ENCODE measurements at regions of chr19 and their contacts with region 1.

Region 1: DNA sequence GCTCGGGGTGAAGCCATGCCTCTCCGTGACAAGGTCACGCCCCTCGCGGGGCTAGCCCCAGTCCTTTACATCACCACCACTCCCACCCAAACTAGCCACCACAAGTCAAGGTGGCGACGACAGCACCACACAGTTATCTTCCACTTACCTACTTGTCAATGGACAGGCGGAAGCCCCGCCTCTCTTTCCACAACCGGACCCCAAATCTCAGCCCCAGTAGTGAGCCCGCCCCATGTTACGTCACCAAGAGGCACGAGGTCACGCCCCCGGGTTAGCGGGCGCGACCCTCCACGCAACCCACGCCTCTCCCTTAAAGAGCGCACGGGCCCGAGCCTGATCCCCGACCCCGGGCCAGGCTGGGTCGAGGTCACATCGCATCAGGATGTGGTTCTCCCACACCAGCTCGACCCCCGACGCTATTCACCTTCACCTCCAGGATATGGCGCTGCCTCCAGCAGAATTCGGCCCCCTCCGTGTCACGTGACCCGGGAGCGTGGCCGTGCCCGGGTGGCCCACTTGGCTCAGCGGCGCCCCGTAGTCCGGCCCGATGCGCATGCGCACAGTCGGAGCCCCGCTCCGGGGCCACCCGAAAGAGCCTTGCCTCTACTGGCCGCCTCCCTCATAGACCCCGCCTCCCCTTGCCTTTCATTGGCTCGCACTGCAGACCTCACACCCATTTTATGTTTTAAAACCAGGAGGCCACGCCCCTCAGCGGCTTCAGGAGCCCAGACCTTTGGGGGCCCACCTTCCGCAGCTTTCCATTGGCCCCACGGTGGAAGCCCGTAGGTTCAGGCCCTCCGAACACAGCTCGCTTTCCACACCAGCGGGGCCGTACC is 18.2 kb downstream of the SYDE1 start:
- DNase-seq: peak; percentile 95
- H3K4me3 ChIP-seq: peak overlapping the region; percentile 64 to 83
- H3K27ac ChIP-seq: peak overlapping the region; percentile 82 to 84
- H3K4me1 ChIP-seq: no peaks in the 10 kb centered on the region
- H3K27me3 ChIP-seq: no peaks in the 10 kb centered on the region
- CTCF ChIP-seq: peak in 1 of 4 experiments; percentile 38
- POLR2A ChIP-seq: peak; percentile 52

Region 2: DNA sequence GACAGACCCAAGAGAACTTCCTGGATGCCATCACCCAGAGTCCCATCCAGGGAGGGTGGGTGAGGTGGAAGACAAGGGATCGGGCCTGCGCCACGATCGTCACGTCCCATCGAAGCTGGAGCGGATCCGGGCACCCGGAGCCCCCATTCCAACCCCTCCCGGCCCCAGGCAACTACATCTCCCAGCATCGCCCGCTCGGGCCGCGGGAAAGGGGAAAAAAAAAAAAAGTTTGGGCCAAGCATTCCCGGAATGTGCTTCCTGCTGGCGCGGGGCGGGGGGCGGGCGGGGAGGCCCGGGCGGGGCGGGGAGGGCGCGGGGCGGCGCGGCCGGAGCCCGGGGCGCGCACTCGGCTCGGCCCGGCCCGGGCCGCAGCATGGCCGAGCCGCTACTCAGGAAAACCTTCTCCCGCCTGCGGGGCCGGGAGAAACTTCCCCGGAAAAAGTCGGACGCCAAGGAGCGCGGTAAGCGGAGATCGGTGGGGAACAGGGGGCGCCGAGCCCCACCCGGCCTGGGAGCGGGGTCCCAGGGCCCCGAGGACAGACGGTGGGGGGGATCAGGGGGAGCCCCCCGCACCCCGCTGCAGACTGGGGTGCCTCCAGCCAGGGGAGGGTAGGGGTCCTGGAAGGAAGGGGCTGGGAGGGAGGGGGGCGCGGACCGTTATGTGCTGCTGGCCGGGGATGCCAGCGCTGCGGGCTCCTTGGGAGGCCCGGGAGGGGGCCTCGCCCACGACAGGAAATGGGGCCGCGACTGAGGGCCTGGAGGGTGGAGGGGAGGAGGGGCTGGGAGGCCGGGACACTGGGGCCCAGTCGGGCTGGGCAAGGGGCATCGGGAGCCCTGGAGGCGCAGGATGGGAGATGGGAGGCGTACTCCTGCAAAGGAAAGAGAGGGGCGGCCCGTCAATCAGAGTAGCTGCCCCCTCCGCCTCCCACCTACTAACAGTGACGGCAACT is 18.1 kb before region 1 on chr19 and contains the start of gene SYDE1:
- intact Hi-C with region 1: loop called (anchors 1 kb)
- DNase-seq: no peak
- H3K4me3 ChIP-seq: peak within 1 kb of the TSS; percentile 54 to 63
- H3K27ac ChIP-seq: peak within 1 kb of the TSS; percentile 82 to 89
- H3K4me1 ChIP-seq: no peaks in the 10 kb centered on the region
- H3K27me3 ChIP-seq: no peaks in the 10 kb centered on the region
- CTCF ChIP-seq: no peak
- POLR2A ChIP-seq: no peak
- total RNA-seq, gene SYDE1: 12.2 to 30.4 TPM